ENCODE measurements at regions of chr16 and their contacts with region 1.

Region 1: DNA sequence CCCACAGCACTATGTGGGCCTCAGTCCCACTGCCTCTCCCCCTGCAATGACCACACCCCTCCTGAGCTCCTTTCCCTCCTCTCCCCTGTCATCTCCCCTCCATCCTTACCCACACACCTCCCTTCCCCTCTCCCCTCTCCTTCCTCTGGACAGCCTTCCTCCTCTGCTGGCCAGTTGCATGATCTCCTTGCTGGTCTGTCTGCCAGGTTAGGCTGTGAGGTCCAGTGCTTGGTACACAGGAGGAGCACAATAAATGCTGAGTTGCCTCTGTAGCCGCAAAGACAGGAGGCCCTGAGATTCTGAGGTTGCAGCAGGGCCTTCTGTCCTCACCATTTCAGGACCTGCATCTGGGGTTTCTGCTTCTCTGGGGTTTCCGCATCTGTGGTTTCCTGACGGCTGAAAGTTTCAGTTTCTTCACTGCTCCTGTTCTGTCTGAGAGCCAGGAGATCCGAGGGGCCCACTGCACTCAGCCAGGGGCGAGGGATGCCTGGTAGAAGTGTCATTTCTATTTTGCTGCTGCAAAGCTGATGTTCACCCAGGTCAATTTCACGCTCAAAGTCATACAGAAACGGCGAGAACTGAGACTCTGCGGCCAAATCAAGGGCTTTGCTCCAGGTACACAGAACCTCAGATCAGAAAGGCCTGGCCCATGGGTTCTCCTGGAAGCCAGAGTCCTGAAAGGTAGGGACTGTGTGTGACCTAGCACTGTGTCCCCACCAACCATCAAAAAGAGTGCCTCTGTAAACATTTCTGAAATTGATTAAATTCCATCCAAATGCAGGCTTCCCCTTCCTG is 4.6 kb upstream of the SLC12A3 start:
- DNase-seq: no peak
- H3K4me3 ChIP-seq: no peak overlapping the region
- H3K27ac ChIP-seq: no peak overlapping the region
- H3K4me1 ChIP-seq: peaks cover 26% of the 10 kb centered on the region
- H3K27me3 ChIP-seq: no peaks in the 10 kb centered on the region
- CTCF ChIP-seq: no peak

Region 2: DNA sequence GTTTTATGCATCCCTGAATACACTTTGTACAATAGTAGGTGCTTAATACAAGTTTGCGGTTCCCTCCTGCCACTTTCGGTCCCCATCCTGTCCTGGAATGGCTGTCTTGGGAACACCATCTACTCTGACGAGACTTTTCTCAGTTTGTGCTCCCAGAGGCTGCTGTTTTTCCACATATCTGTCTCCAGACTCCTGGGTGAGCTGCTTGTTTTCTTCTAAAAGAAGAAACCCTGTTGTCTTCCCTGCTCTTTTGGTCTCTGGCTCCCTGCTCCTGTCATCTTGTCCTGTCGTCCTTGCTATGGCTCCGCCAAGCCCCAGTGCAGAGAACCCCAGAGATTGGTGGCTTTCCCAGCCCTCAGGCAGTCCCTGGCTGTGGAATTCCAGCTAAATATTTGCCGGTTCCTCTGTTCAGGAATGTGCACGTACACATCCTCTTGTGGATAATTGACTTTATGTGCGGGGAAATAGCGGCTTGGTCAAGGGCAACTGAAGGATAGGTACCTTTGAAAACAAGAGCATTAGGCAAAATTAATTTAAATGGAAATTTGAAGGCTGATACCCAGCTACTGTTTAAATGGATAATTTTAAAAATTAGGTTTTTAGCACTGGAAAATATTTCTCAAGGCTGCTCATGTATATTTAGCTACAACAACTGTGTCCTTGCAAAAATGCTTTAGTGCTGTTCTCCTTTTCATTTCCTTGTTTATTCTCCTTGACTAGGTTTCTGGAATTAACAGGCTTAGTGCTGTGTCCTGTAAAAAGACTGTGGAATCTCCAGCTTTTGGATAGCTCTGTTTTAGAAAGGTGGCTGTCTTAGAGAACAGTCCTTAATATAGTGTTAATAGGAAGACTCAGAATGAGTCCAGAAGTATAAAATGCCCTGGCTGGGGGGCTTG is 45.6 kb before region 1 on chr16:
- CTCF ChIA-PET with region 1: no interaction called
- POLR2A ChIA-PET with region 1: interaction called, 6 read pairs
- intact Hi-C with region 1: loop called (anchors 2 kb)
- DNase-seq: peak in 1 of 2 experiments; percentile 33
- H3K4me3 ChIP-seq: no peak overlapping the region
- H3K27ac ChIP-seq: no peak overlapping the region
- H3K4me1 ChIP-seq: peaks cover 20% of the 10 kb centered on the region
- H3K27me3 ChIP-seq: no peaks in the 10 kb centered on the region
- CTCF ChIP-seq: no peak

Measured in PC-9 (cell line).